ENCODE measurements at regions of chr9 and their contacts with region 1.

Region 1: DNA sequence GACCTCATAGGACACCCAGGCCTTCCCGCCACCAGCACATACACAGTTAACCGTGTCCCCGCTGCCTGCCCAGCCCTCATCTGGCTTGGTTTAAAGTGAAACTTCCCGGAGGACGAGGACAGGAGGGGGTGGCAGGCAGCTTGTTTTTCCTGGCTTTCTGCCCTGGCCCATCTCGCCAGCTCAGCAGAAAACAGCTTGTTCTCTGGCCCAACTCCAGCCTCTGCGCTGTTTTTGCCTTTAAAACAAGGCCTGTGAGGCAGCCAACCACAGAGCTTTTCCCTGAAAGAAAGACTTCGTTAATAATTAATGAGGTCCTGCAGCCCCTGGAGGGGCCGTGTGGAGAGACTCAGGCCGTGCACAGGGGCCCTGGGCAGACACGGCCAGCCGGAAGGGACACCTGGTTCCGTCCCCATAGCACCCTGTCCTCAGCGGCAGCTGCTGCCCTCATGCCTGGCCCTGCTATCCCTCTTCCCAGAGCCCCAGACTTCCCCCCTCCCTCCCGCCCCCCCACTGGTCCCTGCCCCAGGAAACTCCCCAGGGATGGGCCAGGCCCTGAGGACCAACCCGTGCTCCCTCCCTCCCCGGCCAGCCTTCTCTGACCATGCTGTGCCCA is 108.7 kb downstream of the RXRA start:
- DNase-seq: peak; percentile 95 to 99 (median 98)
- H3K4me3 ChIP-seq: peak overlapping the region in 1 of 4 donors; percentile 20
- H3K27ac ChIP-seq: peak overlapping the region; percentile 26 to 91 (median 80)
- H3K4me1 ChIP-seq: peaks cover 23 to 70% of the 10 kb centered on the region in 2 donors
- H3K27me3 ChIP-seq: no peaks in the 10 kb centered on the region
- CTCF ChIP-seq: no peak
- POLR2A ChIP-seq: no peak

Region 2: GRCh38 chr9:134059661-134060395 is 375.2 kb before region 1 on chr9:
- intact Hi-C with region 1: loop called in 1 of 2 experiments (anchors 10 kb)
- DNase-seq: peak in 6 of 7 donors; percentile 33 to 61 (median 49)
- H3K4me3 ChIP-seq: no peak overlapping the region
- H3K27ac ChIP-seq: peak overlapping the region in 1 of 5 donors; percentile 83
- H3K4me1 ChIP-seq: peaks cover 77 to 93% of the 10 kb centered on the region in 2 donors
- H3K27me3 ChIP-seq: no peaks in the 10 kb centered on the region
- CTCF ChIP-seq: no peak
- POLR2A ChIP-seq: no peak

Region 3: GRCh38 chr9:134333234-134333873 is 101.6 kb before region 1 on chr9:
- intact Hi-C with region 1: loop called (anchors 5 kb)
- DNase-seq: peak in 4 of 7 donors; percentile 60 to 85 (median 68)
- H3K4me3 ChIP-seq: no peak overlapping the region
- H3K27ac ChIP-seq: peak overlapping the region in 4 of 5 donors; percentile 16 to 83 (median 60)
- H3K4me1 ChIP-seq: peaks cover 90 to 100% of the 10 kb centered on the region in 2 donors
- H3K27me3 ChIP-seq: no peaks in the 10 kb centered on the region
- CTCF ChIP-seq: no peak
- POLR2A ChIP-seq: no peak

Region 4: GRCh38 chr9:134365791-134366688 is 69.0 kb before region 1 on chr9:
- intact Hi-C with region 1: no loop called
- DNase-seq: peak; percentile 93 to 98 (median 95)
- H3K4me3 ChIP-seq: no peak overlapping the region
- H3K27ac ChIP-seq: peak overlapping the region; percentile 71 to 96 (median 91)
- H3K4me1 ChIP-seq: peaks cover 56 to 71% of the 10 kb centered on the region in 2 donors
- H3K27me3 ChIP-seq: no peaks in the 10 kb centered on the region
- CTCF ChIP-seq: peak in 3 of 6 experiments; percentile 1 to 20 (median 13)
- POLR2A ChIP-seq: peak; percentile 71 to 90

Region 5: GRCh38 chr9:134381671-134382516 is 53.1 kb before region 1 on chr9:
- intact Hi-C with region 1: loop called (anchors 10 kb)
- DNase-seq: peak in 1 of 7 donors; percentile 47
- H3K4me3 ChIP-seq: no peak overlapping the region
- H3K27ac ChIP-seq: peak overlapping the region in 2 of 5 donors; percentile 34 to 99
- H3K4me1 ChIP-seq: peaks cover 62 to 98% of the 10 kb centered on the region in 2 donors
- H3K27me3 ChIP-seq: no peaks in the 10 kb centered on the region
- CTCF ChIP-seq: peak in 4 of 6 experiments; percentile 11 to 21 (median 16)
- POLR2A ChIP-seq: no peak

Measured in adrenal gland (tissue), 19 donors.